Activated CD4-positive, alpha-beta T cell treated with anti-CD3 and anti-CD28 coated beads for 36 hours (primary cell): ENCODE measurements at regions of chr16 and their contacts with region 1.

Region 1: GRCh38 chr16:46947900-46948547 is 25.4 kb downstream of the DNAJA2 start:
- DNase-seq: peak; percentile 56
- ATAC-seq: peak; percentile 64
- H3K4me3 Mint-ChIP-seq: no peak overlapping the region
- H3K27ac Mint-ChIP-seq: peak overlapping the region; percentile 70
- H3K4me1 Mint-ChIP-seq: peaks cover 22% of the 10 kb centered on the region
- H3K27me3 Mint-ChIP-seq: no peaks in the 10 kb centered on the region

Region 2: DNA sequence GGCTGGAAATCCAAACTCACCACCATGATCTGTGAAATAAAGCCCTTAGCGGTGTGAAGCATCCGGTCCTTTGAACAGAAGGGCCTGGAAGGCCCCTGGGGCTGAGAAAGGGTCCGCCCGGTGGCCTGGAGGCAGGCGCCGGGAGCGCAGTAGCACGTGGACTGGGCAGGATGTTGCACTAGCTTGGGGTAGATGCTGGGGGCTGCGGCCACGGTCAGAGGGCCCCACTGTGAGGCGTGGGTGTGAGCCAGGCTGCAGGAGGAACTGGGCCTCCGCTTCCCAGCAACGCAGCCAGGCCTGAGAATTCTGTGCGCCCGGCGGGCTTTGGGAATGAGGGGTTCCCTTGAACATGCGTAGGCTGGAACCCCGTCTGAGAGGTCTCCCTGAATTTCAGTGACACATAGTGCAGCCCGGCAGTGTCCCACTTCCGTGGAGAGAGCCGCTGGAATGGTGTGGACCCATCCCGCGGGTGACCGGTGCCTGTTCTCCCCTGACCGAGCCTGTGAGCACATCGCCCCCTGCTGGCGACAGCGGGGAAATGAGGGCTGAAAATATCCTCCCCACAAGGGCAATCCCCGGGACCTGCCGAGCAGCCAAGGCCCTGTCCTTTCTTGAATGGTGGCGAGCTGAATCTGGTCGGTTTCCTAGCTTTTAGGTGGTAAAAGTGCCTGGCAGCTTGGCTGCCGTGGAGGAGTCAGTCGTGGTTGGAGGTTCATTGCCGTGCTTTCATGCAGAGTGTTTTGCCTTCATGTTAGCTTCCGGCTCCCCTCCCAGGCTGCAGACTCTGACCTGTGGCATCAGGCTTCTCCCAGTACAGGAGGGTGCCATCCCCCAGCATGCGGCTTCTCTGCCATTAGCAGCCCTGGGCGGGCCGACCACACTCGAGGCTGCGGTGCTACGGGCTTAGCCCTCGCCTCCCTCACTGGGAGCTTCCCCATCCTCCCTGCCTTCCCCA is 18.4 kb before region 1 on chr16:
- CTCF ChIA-PET with region 1: interaction called, 12 read pairs
- POLR2A ChIA-PET with region 1: no interaction called
- intact Hi-C with region 1: no loop called
- DNase-seq: peak; percentile 82
- ATAC-seq: peak; percentile 87
- H3K4me3 Mint-ChIP-seq: no peak overlapping the region
- H3K27ac Mint-ChIP-seq: no peak overlapping the region
- H3K4me1 Mint-ChIP-seq: peaks cover 4% of the 10 kb centered on the region
- H3K27me3 Mint-ChIP-seq: no peaks in the 10 kb centered on the region

Region 3: DNA sequence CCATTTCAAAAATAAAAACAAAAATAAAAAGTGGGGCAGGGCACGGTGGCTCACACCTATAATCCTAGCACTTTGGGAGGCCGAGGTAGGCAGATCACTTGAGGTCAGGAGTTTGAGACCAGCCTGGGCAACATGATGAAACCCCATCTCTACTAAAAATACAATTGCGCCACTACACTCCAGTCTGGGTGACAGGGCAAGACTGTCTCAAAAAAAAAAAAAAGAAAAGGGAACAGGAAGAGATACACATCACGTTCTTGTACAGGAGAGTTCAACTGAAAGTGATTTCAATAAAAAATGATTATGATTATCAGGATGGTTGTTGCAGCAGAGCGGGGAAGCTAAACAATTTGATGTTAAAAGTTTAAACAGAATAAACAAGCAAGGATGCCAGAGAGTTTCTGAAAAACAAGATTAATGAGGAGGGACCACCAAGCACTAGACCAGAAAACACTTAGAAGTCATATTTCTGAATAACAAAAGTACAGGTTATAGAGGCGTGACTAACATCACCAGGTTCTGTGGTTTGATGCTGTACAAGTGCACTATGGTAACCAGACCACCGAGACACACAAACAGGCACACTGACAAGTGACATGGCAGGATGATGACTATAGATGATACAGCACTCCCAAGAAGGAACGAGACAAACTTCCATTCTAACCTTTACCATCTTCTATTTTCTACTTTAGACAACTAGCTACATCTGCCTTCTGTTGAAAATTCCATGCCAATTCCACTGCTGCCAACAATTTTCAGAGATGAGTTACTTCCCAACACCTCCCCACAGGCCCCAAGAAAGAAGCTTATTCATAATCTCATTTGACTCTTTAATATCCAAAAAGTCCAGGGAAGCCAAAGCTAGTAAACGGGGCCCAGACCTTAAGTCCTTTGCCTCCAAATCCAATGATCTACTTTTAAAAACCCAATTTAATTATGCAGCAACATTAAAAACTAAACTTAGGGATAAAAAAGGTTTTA is 13.6 kb after region 1 on chr16:
- CTCF ChIA-PET with region 1: interaction called, 8 read pairs
- POLR2A ChIA-PET with region 1: no interaction called
- intact Hi-C with region 1: loop called in 1 of 2 experiments (anchors 1 kb)
- DNase-seq: peak; percentile 66
- ATAC-seq: peak; percentile 97
- H3K4me3 Mint-ChIP-seq: peak overlapping the region; percentile 11
- H3K27ac Mint-ChIP-seq: peak overlapping the region; percentile 88
- H3K4me1 Mint-ChIP-seq: peaks cover 40% of the 10 kb centered on the region
- H3K27me3 Mint-ChIP-seq: no peaks in the 10 kb centered on the region

Region 4: GRCh38 chr16:47018223-47018891 is 70.3 kb after region 1 on chr16:
- CTCF ChIA-PET with region 1: interaction called, 3 read pairs
- POLR2A ChIA-PET with region 1: no interaction called
- intact Hi-C with region 1: loop called (anchors 1 kb)
- DNase-seq: peak; percentile 76
- ATAC-seq: peak; percentile 95
- H3K4me3 Mint-ChIP-seq: no peak overlapping the region
- H3K27ac Mint-ChIP-seq: peak overlapping the region; percentile 60
- H3K4me1 Mint-ChIP-seq: peaks cover 18% of the 10 kb centered on the region
- H3K27me3 Mint-ChIP-seq: no peaks in the 10 kb centered on the region

Region 5: DNA sequence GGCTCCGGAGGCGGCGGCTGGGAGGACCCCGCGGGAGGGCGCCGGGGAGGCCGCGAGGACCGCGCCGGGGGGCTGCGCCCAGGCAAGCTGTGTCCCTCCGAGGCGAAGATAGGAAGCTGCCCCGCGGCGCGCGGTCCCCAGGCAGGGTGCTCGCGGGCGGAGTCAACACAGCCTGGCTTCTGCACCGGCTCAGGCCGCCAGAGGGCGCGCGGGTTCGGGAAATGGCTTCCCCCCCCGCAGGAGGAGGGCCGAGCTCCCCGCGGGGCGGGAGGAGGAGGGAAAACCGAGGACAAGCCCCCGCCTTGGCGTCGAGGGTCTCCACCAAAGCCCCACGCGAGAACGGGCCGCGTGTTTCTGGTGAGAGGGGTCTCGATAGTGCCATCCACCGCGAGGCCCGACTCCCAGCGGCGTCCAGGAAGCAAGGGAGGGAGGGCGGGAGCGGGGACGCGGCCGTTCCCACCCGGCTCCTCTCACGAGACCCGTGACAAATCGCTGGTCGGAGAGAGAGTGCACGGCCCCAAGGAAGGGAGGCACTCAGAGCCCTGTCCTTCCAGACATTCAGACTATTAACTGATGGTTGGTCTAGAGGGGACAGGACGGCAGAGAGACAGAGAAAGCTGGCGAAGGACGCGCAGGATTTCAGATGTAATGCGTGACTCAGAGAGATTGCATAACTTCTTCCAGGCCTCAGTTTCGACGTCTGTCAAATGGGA is 89.9 kb after region 1 on chr16:
- CTCF ChIA-PET with region 1: interaction called, 3 read pairs
- POLR2A ChIA-PET with region 1: no interaction called
- intact Hi-C with region 1: loop called in 1 of 2 experiments (anchors 1 kb)
- DNase-seq: peak; percentile 94
- ATAC-seq: peak; percentile 98
- H3K4me3 Mint-ChIP-seq: peak overlapping the region; percentile 65
- H3K27ac Mint-ChIP-seq: no peak overlapping the region
- H3K4me1 Mint-ChIP-seq: peaks cover 2% of the 10 kb centered on the region
- H3K27me3 Mint-ChIP-seq: peaks cover 8% of the 10 kb centered on the region

Region 6: DNA sequence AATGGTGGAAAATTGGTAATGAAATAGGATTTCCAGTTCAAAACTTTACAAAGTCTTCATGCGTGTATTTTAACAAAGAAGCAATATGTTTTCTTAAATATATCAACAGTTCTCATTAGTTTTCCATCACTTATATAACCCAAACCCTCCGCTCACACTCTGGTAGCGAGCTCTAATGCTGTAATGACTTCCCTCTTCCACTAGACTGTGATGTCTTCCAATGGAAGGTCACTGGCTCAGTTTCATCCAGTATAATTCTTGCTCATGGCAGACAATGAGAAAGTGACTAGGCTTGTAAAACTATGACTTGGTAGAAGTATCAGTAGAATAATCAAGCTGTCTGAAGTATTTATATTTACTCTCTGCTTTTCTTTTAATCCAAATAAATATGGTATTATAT is 162.9 kb after region 1 on chr16:
- CTCF ChIA-PET with region 1: no interaction called
- POLR2A ChIA-PET with region 1: no interaction called
- intact Hi-C with region 1: loop called in 1 of 2 experiments (anchors 5 kb)
- DNase-seq: no peak
- ATAC-seq: no peak
- H3K4me3 Mint-ChIP-seq: no peak overlapping the region
- H3K27ac Mint-ChIP-seq: no peak overlapping the region
- H3K4me1 Mint-ChIP-seq: peaks cover 23% of the 10 kb centered on the region
- H3K27me3 Mint-ChIP-seq: peaks cover 3% of the 10 kb centered on the region